ENCODE measurements at regions of chr7 and their contacts with region 1.

Region 1: GRCh38 chr7:143214789-143215679 is 6.8 kb upstream of the TAS2R40 start:
- H3K4me3 ChIP-seq: no peak overlapping the region
- H3K27ac ChIP-seq: no peak overlapping the region
- H3K4me1 ChIP-seq: no peaks in the 10 kb centered on the region
- CTCF ChIP-seq: peak; percentile 87

Region 2: GRCh38 chr7:142632291-142633134 is 582.5 kb before region 1 on chr7:
- CTCF ChIA-PET with region 1: interaction called, 15 read pairs
- POLR2A ChIA-PET with region 1: no interaction called
- H3K4me3 ChIP-seq: no peak overlapping the region
- H3K27ac ChIP-seq: no peak overlapping the region
- H3K4me1 ChIP-seq: no peaks in the 10 kb centered on the region
- CTCF ChIP-seq: peak; percentile 51; the same call in 1 of the 2 replicates

Region 3: GRCh38 chr7:142873281-142873787 is 341.7 kb before region 1 on chr7:
- CTCF ChIA-PET with region 1: interaction called, 37 read pairs
- POLR2A ChIA-PET with region 1: no interaction called
- H3K4me3 ChIP-seq: no peak overlapping the region
- H3K27ac ChIP-seq: no peak overlapping the region
- H3K4me1 ChIP-seq: no peaks in the 10 kb centered on the region
- CTCF ChIP-seq: peak; percentile 85

Region 4: GRCh38 chr7:142908921-142909890 is 305.8 kb before region 1 on chr7:
- CTCF ChIA-PET with region 1: interaction called, 12 read pairs
- POLR2A ChIA-PET with region 1: no interaction called
- H3K4me3 ChIP-seq: no peak overlapping the region
- H3K27ac ChIP-seq: no peak overlapping the region
- H3K4me1 ChIP-seq: no peaks in the 10 kb centered on the region
- CTCF ChIP-seq: no peak

Region 5: DNA sequence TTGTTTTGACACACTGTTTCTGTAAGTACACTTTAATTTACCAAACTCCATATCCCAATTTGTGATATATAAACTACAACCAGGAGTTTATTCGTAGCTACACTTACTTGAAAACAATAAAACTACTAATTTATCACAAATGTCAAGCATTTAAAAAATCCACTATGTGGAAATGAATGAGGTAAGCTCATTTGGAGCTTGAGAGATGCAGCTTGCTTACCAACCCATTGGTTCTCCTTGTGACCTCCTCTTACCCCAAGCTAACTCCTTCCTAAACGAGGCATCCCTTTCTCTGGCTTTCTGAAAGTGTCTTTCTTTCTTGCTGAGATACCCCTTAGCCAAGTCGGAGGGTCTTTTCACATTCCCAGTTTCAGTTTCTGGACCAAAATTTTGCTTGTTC is 160.4 kb before region 1 on chr7:
- CTCF ChIA-PET with region 1: no interaction called
- POLR2A ChIA-PET with region 1: no interaction called
- H3K4me3 ChIP-seq: no peak overlapping the region
- H3K27ac ChIP-seq: no peak overlapping the region
- H3K4me1 ChIP-seq: no peaks in the 10 kb centered on the region
- CTCF ChIP-seq: no peak

Region 6: DNA sequence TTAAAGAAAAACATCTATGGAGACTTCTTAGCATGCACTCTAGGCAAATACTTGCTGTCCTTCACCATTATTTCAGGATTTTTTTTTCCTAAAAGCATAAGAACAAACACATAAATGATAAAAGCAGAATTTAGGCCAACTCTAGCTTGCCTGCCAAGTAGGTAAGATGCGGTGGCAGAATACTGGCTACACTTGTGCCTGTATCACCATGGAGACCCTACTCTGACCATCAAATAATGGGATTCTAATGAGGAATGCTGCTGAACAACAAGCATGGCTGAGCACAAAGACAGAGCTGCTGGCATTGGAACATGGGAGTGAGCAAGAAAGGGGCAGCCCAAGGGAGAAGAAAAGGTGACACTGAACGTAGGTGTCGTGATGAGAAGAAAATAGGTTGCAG is 11.6 kb before region 1 on chr7:
- CTCF ChIA-PET with region 1: interaction called, 22 read pairs
- POLR2A ChIA-PET with region 1: no interaction called
- H3K4me3 ChIP-seq: no peak overlapping the region
- H3K27ac ChIP-seq: no peak overlapping the region
- H3K4me1 ChIP-seq: no peaks in the 10 kb centered on the region
- CTCF ChIP-seq: no peak

Region 7: GRCh38 chr7:143248761-143249354 is 33.8 kb after region 1 on chr7:
- CTCF ChIA-PET with region 1: interaction called, 11 read pairs
- POLR2A ChIA-PET with region 1: no interaction called
- H3K4me3 ChIP-seq: no peak overlapping the region
- H3K27ac ChIP-seq: no peak overlapping the region
- H3K4me1 ChIP-seq: no peaks in the 10 kb centered on the region
- CTCF ChIP-seq: no peak

Region 8: DNA sequence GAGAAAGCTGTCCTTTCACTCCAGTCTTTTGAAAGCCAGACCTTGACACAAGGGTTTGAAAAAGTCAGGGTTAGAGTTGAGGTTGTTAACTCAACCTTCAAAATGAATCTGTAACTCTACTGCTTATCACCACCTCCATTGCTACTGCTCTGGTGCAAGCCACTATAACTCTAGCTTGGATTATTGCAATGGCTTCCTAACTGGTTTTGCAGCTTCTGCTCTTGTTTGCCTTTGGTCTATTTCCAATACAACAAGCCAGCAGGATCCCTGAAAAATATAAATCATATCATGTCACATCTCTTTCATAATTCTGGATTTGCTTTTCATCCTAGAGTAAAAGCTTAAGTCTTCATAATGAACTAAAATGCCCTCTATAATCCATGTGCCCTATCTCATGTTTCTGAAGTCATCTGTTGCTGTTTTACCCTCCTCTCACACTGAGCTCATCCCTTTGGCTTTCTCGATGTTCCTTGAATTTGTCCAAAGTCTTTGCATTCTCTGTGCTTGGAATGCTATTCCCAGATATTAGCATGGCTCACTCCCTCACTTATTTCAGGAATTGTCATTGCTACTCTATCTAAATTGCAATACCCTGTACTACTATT is 239.1 kb after region 1 on chr7:
- CTCF ChIA-PET with region 1: no interaction called
- POLR2A ChIA-PET with region 1: no interaction called
- H3K4me3 ChIP-seq: no peak overlapping the region
- H3K27ac ChIP-seq: no peak overlapping the region
- H3K4me1 ChIP-seq: no peaks in the 10 kb centered on the region
- CTCF ChIP-seq: no peak